ENCODE measurements at regions of chrX and their contacts with region 1.

Region 1: DNA sequence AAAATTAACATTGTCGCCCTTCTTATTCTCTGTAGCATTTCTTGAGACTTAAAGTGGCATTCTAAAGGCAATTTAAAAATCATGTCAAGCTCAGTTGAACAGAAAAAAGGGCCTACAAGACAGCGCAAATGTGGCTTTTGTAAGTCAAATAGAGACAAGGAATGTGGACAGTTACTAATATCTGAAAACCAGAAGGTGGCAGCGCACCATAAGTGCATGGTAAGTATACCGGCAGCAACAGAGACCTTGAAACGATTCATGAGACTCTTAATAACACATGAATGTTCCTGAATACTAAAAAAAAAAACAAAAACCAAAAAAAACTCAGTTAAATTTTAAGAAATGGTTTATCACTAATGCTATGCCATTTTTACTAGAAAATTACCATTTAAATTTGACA is 82.4 kb upstream of the HPRT1 start:
- DNase-seq: no peak
- ATAC-seq: peak; percentile 55
- H3K4me3 ChIP-seq: no peak overlapping the region
- H3K27ac ChIP-seq: no peak overlapping the region
- H3K4me1 ChIP-seq: no peaks in the 10 kb centered on the region
- H3K27me3 ChIP-seq: no peaks in the 10 kb centered on the region
- CTCF ChIP-seq: peak; percentile 15 to 48 (median 33); a peak in 4 of 6 replicates
- EP300 ChIP-seq: no peak
- POLR2A ChIP-seq: no peak
- RAD21 ChIP-seq: peak; percentile 51

Region 2: DNA sequence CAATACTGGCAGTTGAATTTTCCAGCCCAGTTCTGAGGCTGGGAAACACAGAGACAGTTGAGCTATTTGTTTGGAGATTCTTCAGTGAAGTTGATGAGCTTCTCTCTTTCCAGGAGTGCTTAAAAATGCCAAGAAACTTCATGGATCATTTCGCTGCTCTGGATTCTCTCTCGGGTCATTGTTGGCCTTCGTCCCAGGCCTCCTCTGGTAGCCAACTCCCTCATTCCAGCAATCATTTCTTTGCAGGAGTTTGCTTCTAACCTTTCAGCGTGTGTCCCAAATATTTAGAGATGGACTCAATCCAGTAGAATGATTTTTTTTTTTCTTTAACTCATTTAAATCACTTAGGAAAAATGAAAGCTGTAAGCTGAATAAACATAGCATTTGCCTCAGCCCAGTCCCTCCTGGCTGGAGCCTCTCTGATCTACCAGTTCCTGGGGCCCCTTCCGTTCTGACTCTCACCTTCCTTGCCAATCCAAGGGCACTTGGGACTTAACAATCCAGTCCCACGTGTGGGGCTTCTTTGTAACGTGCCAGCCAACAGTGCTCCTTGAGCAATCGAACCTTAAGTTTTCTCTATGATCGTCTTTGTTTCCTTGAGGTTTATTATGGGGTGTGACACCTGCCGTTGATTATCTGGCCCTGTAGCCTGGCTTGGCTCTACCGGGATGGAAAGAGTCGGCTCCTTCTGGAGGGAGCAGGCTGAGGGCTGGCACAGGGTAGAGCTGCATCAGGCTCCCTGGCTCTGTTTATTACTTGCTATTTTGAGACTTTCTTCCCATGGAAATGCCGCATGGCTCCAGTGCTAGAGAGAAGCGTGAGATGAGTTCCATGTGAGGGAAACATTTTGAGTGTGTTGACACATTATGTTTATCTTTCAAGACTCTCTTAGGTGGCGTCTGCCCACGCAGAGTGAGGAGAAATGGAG is 881.8 kb before region 1 on chrX:
- CTCF ChIA-PET with region 1: no interaction called
- POLR2A ChIA-PET with region 1: no interaction called
- RAD21 ChIA-PET with region 1: no interaction called
- SMC1A ChIA-PET with region 1: no interaction called
- in situ Hi-C with region 1: no loop called
- intact Hi-C with region 1: no loop called
- DNase-seq: no peak
- ATAC-seq: no peak
- H3K4me3 ChIP-seq: no peak overlapping the region
- H3K27ac ChIP-seq: no peak overlapping the region
- H3K4me1 ChIP-seq: no peaks in the 10 kb centered on the region
- H3K27me3 ChIP-seq: no peaks in the 10 kb centered on the region
- CTCF ChIP-seq: no peak
- EP300 ChIP-seq: no peak
- POLR2A ChIP-seq: no peak
- RAD21 ChIP-seq: no peak

Region 3: DNA sequence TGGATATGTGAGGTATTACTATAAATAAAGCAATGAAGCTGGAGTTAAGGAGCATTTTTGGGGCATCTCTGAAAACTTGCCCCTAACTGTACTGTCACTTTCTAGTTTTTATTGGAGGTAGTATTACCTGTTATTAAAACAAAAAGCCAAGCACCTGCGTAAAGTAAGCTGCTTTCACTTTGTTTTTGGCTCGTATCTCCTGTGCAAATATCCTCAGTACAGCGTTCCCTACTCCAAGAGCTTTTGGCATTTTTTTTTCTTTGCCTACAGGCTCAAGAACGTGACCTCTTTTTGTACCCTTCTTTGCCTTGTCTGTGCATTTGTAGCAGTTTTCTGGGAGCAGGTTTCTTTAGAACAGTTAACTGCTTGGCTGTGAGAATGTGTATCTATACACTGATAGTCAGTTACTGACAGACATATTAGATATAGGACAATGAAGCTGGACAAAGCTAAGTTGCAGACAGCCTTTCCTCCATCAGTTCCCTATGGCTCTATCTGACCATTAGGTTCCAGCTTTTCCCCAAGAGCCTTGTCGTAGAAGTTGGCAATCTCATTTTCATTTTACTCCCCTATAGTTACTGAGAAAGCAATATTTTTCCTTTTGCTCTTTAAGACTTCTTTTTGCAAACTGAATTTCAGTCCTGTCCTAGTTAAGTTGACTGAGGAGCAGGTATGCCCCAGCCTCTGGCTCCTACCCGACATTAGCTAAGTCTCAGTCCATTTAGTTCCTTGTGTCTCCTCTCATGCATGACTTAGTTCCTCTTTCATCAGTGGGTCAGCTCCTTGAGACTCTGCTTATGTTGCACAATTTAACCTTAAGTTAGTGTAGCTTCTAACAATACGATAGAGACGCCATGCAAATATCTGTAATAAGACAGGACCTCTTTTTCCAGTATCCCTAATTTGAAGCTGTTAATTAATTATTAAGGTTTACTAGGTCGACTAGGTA is 10.9 kb after region 1 on chrX:
- CTCF ChIA-PET with region 1: interaction called, 31 read pairs
- POLR2A ChIA-PET with region 1: interaction called, 6 read pairs
- RAD21 ChIA-PET with region 1: interaction called, 10 read pairs
- SMC1A ChIA-PET with region 1: interaction called, 54 read pairs
- in situ Hi-C with region 1: no loop called
- intact Hi-C with region 1: no loop called
- DNase-seq: peak; percentile 43
- ATAC-seq: peak; percentile 100
- H3K4me3 ChIP-seq: no peak overlapping the region
- H3K27ac ChIP-seq: no peak overlapping the region
- H3K4me1 ChIP-seq: peaks cover 3% of the 10 kb centered on the region; the same call in 1 of the 2 replicates
- H3K27me3 ChIP-seq: no peaks in the 10 kb centered on the region
- CTCF ChIP-seq: no peak
- EP300 ChIP-seq: no peak
- POLR2A ChIP-seq: no peak
- RAD21 ChIP-seq: no peak

Measured in GM12878 (cell line).